Activated naive CD8-positive, alpha-beta T cell treated with anti-CD3 and anti-CD28 coated beads, Interleukin-2, amount 10 ng/mL, durations not matched to agents 7 days and 5 days (primary cell): ENCODE measurements at regions of chr12 and their contacts with region 1.

Region 1: GRCh38 chr12:93441617-93442410 is at the start of gene UBE2N:
- DNase-seq: peak; percentile 98
- ATAC-seq: peak; percentile 83
- H3K4me3 Mint-ChIP-seq: peak within 1 kb of the TSS; percentile 93
- H3K27ac Mint-ChIP-seq: peak within 1 kb of the TSS; percentile 96
- H3K4me1 Mint-ChIP-seq: peaks cover 40% of the 10 kb centered on the region
- H3K27me3 Mint-ChIP-seq: no peaks in the 10 kb centered on the region
- total RNA-seq, gene UBE2N: 121 to 127 TPM

Region 2: DNA sequence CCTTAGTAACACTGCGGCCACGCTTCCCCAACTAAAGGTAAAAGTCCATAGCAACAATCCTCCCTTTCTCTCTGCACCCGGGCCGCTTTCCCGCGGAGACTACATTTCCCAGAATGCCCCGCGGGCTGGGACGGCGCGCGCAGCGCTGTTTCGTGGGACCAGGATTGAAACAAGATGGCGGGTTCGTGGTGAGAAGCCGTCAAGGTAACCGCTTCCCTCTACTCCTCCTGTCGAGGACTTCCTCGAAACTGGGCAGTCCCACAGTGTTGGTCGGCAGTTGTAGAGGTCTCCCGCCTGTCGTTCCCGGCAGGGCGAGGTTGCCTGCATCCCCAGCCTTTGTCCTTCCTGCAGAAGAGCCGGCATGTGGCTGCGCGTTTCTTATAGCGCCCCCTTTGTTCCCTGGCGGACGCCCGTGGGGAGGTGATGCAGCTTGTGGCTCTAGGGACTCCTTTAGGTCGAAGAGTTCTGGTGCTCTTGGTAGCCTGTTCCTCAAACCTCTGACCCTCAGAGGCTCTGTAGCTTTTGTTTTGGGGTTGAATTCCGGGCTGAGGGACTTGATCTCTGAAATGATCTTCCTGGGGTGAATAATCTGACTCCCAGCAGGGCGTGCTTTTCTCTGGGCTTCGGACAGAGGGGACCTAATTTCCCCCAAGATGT is 25.7 kb after region 1 on chr12 and contains the start of gene MRPL42:
- POLR2A ChIA-PET with region 1: interaction called, 10 read pairs
- DNase-seq: peak; percentile 95
- ATAC-seq: peak; percentile 90
- H3K4me3 Mint-ChIP-seq: peak within 1 kb of the TSS; percentile 93
- H3K27ac Mint-ChIP-seq: peak within 1 kb of the TSS; percentile 93
- H3K4me1 Mint-ChIP-seq: peaks cover 28% of the 10 kb centered on the region
- H3K27me3 Mint-ChIP-seq: no peaks in the 10 kb centered on the region
- total RNA-seq, gene MRPL42: 47.4 to 50.2 TPM